ENCODE measurements at regions of chr1 and their contacts with region 1.

Region 1: DNA sequence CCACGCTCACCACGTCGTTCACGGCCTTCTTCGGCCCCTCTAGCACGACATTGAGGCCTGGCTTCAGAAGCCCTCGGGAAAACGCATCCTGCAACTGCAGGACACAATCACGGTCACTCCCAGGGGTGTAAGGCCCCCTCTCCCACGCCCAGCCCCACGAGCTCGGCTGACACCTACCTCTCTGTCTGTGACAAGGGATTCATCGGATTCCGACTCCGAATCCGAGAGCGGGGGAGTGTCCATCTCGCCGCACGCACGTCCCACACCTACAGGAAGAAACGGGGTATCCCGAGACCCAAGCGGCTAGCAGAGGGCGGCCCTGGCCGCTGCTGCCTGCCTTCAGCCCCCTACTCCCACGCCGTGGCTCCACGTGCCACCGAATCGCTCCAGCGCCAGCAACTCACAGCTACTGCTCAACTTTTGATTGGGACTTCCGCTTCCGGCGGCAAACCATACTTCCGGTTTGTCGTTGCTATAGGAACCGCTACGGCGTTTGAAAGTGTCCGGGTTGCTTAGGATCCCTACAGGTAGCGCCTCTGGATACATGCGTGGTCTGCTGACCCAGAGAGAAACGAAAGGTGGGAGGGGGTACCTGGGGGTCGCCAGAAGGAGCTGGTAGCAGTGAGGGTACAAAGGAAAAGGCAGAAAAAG is at the starts of genes CFAP57 and EBNA1BP2:
- DNase-seq: peak; percentile 97
- ATAC-seq: peak; percentile 73
- H3K4me3 ChIP-seq: peak within 1 kb of the TSS; percentile 75 to 96 (median 82)
- H3K4me3 Mint-ChIP-seq: peak within 1 kb of the TSS; percentile 96
- H3K27ac ChIP-seq: peak within 1 kb of the TSS; percentile 31 to 72
- H3K27ac Mint-ChIP-seq: peak within 1 kb of the TSS; percentile 93
- H3K4me1 ChIP-seq: peaks cover 7 to 12% of the 10 kb centered on the region in 2 donors
- H3K4me1 Mint-ChIP-seq: peaks cover 27% of the 10 kb centered on the region
- H3K27me3 ChIP-seq: peaks cover 0 to 18% (median 13%) of the 10 kb centered on the region in 4 experiments
- H3K27me3 Mint-ChIP-seq: peaks cover 20% of the 10 kb centered on the region
- CTCF ChIP-seq: no peak
- total RNA-seq, gene CFAP57: 0.15 and 0.44 TPM in 2 replicates
- total RNA-seq, gene EBNA1BP2: 25.9 and 27.4 TPM in 2 replicates

Region 2: DNA sequence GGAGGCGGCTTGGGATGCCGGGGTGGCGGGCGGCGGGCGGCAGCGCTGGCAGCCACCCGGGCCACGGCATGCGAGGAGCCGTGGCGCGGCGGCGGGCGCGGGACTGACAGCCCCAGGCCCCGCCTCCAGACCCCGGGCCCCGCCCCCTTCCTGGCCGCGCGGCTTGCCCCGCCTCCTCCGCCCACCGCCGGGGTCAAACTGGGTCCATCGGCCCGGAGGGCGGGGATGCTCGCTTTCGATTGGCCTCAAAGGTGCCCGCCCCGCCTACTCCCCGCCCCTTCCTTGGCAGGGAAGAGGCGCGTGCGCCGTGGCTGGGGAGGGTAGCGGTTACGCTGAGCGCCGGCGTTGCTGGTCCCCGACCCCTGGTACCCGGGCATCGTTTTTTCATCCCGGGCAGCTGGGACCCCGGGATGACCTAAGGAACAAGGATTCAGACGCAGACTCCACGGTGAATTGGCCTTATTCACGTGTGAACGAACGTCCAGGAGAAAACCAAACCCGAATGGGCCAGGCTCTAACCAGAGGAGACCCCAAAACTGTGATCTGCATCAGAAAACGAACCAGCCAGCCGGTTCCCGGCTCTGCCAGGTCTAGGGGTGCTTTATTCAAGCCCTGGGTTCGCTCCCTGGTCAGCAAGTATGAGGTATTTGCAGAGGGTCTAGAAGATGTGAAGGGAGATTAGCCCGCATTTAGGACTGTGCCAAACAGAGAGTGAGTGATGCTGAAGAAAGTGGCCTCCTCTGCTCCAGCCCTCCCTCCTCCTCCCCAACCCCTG is 1136.0 kb before region 1 on chr1:
- CTCF ChIA-PET with region 1: no interaction called
- POLR2A ChIA-PET with region 1: no interaction called
- intact Hi-C with region 1: loop called (anchors 5 kb)
- DNase-seq: peak; percentile 95
- ATAC-seq: peak; percentile 94
- H3K4me3 ChIP-seq: peak overlapping the region; percentile 13 to 93 (median 83)
- H3K4me3 Mint-ChIP-seq: peak overlapping the region; percentile 72
- H3K27ac ChIP-seq: peak overlapping the region in 1 of 2 donors; percentile 34
- H3K27ac Mint-ChIP-seq: peak overlapping the region; percentile 67
- H3K4me1 ChIP-seq: peaks cover 13 to 15% of the 10 kb centered on the region in 2 donors
- H3K4me1 Mint-ChIP-seq: peaks cover 12% of the 10 kb centered on the region
- H3K27me3 ChIP-seq: peaks cover 0 to 6% (median 0%) of the 10 kb centered on the region in 4 experiments
- H3K27me3 Mint-ChIP-seq: peaks cover 13% of the 10 kb centered on the region
- CTCF ChIP-seq: no peak

Region 3: GRCh38 chr1:42816585-42817434 is 355.2 kb before region 1 on chr1 and contains the starts of genes ERMAP and SVBP:
- CTCF ChIA-PET with region 1: no interaction called
- POLR2A ChIA-PET with region 1: no interaction called
- intact Hi-C with region 1: loop called (anchors 2 kb)
- DNase-seq: peak; percentile 97
- ATAC-seq: peak; percentile 86
- H3K4me3 ChIP-seq: peak within 1 kb of the TSS; percentile 57 to 82 (median 77)
- H3K4me3 Mint-ChIP-seq: peak within 1 kb of the TSS; percentile 89
- H3K27ac ChIP-seq: peak within 1 kb of the TSS; percentile 75 to 82
- H3K27ac Mint-ChIP-seq: peak within 1 kb of the TSS; percentile 92
- H3K4me1 ChIP-seq: peaks cover 13% of the 10 kb centered on the region in 2 donors
- H3K4me1 Mint-ChIP-seq: peaks cover 20% of the 10 kb centered on the region
- H3K27me3 ChIP-seq: no peaks in the 10 kb centered on the region
- H3K27me3 Mint-ChIP-seq: no peaks in the 10 kb centered on the region
- CTCF ChIP-seq: no peak
- total RNA-seq, gene ERMAP: 13.1 and 13.5 TPM in 2 replicates
- total RNA-seq, gene SVBP: 21.9 and 23.2 TPM in 2 replicates

Region 4: GRCh38 chr1:42931108-42931539 is 240.9 kb before region 1 on chr1:
- CTCF ChIA-PET with region 1: no interaction called
- POLR2A ChIA-PET with region 1: interaction called, 3 read pairs
- intact Hi-C with region 1: loop called (anchors 1 kb)
- DNase-seq: peak; percentile 80
- ATAC-seq: no peak
- H3K4me3 ChIP-seq: peak overlapping the region; percentile 2 to 42 (median 26)
- H3K4me3 Mint-ChIP-seq: peak overlapping the region; percentile 86
- H3K27ac ChIP-seq: peak overlapping the region; percentile 84 to 97
- H3K27ac Mint-ChIP-seq: peak overlapping the region; percentile 97
- H3K4me1 ChIP-seq: peaks cover 54 to 66% of the 10 kb centered on the region in 2 donors
- H3K4me1 Mint-ChIP-seq: peaks cover 80% of the 10 kb centered on the region
- H3K27me3 ChIP-seq: no peaks in the 10 kb centered on the region
- H3K27me3 Mint-ChIP-seq: no peaks in the 10 kb centered on the region
- CTCF ChIP-seq: peak; percentile 69

Region 5: DNA sequence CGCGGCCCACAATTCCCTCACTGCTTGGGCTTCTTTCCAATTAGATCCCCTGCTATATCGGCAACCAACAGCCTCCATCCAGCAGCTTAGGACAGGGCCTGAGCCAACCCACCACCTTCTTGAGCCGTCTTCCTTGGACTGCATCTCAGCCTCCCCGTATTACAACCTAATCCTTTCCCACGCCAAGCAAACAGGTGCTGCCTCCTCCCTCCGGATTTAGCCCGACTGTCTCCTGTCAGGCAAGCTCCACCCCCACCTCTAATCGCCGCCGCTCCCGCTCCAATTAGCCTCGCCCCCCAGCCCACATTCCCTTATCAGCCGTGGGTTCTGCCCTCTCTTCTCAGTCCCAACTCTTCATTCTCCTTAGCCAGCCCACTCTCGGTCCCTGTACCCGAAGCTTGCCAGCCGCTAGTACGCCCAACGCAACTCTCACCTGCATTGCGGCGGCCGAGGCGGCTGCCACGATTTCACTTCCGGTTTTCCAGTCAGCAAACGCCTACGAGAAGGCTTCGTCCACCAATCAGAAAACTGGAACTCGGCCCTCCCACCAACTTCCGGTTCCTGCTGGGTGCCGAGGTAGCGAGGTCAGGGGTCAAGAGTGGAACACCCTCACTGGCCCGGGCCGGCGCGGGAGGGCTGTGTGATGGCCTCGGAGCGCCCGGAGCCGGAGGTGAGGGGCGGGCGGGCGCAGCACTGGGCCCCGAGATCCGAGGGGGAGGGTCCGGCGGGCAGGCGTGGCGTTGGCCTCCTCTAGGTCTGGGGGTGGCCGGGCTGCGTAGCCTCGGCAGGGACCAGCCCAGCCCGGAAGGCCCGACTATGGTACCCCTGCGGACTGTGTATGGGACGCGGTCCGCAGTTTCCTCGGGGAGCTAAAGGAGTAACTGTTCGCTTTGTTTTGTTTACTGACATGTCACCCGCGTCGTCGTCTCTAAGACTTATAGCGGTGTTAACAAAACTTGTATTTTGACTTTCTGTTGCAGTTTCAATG is 217.6 kb after region 1 on chr1 and contains the starts of genes MED8 and SZT2:
- CTCF ChIA-PET with region 1: no interaction called
- POLR2A ChIA-PET with region 1: interaction called, 3 read pairs
- intact Hi-C with region 1: loop called (anchors 1 kb)
- DNase-seq: peak; percentile 95
- ATAC-seq: peak; percentile 96
- H3K4me3 ChIP-seq: peak within 1 kb of the TSS; percentile 82 to 96 (median 92)
- H3K4me3 Mint-ChIP-seq: peak within 1 kb of the TSS; percentile 100
- H3K27ac ChIP-seq: peak within 1 kb of the TSS; percentile 63 to 87
- H3K27ac Mint-ChIP-seq: peak within 1 kb of the TSS; percentile 98
- H3K4me1 ChIP-seq: peaks cover 20 to 24% of the 10 kb centered on the region in 2 donors
- H3K4me1 Mint-ChIP-seq: peaks cover 41% of the 10 kb centered on the region
- H3K27me3 ChIP-seq: no peaks in the 10 kb centered on the region
- H3K27me3 Mint-ChIP-seq: no peaks in the 10 kb centered on the region
- CTCF ChIP-seq: no peak
- total RNA-seq, gene MED8: 30.0 and 31.8 TPM in 2 replicates
- total RNA-seq, gene SZT2: 193 and 197 TPM in 2 replicates

Measured in B cell (primary cell).